ENCODE measurements at regions of chr1 and their contacts with region 1.

Region 1: GRCh38 chr1:230130172-230130944 is 63.3 kb downstream of the GALNT2 start:
- DNase-seq: no peak
- ATAC-seq: no peak
- H3K4me3 ChIP-seq: no peak overlapping the region
- H3K27ac ChIP-seq: no peak overlapping the region
- H3K4me1 ChIP-seq: peaks cover 8% of the 10 kb centered on the region; the same call in 1 of the 2 replicates
- H3K27me3 ChIP-seq: no peaks in the 10 kb centered on the region
- CTCF ChIP-seq: no peak

Region 2: DNA sequence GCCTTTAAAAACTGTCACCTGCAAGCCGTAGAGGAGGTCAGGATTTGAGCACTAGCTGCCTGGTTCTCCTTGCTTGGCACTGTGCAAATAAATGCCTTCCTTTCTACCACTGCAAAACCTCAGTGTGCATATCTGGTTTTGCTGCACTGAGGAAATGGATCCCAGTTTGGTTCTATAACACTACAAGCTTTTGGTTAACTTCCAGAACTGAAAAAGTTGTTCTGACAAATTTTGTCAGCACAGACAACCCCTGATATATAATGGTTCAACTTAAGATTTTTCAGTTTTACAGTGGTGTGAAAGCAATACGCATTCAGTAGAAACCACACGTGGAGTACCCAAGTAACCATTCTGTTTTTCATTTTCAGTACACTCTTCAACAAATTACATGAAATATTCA is 93.1 kb before region 1 on chr1:
- CTCF ChIA-PET with region 1: no interaction called
- POLR2A ChIA-PET with region 1: no interaction called
- in situ Hi-C with region 1: no loop called
- intact Hi-C with region 1: no loop called
- DNase-seq: no peak
- ATAC-seq: no peak
- H3K4me3 ChIP-seq: no peak overlapping the region
- H3K27ac ChIP-seq: no peak overlapping the region
- H3K4me1 ChIP-seq: no peaks in the 10 kb centered on the region
- H3K27me3 ChIP-seq: peaks cover 4% of the 10 kb centered on the region; the same call in 1 of the 2 replicates
- CTCF ChIP-seq: no peak

Region 3: GRCh38 chr1:231666220-231666936 is 1536.0 kb after region 1 on chr1:
- CTCF ChIA-PET with region 1: no interaction called
- POLR2A ChIA-PET with region 1: interaction called, 15 read pairs
- in situ Hi-C with region 1: no loop called
- intact Hi-C with region 1: no loop called
- DNase-seq: no peak
- ATAC-seq: no peak
- H3K4me3 ChIP-seq: no peak overlapping the region
- H3K27ac ChIP-seq: no peak overlapping the region
- H3K4me1 ChIP-seq: no peaks in the 10 kb centered on the region
- H3K27me3 ChIP-seq: no peaks in the 10 kb centered on the region
- CTCF ChIP-seq: no peak

Measured in Panc1 (cell line).